AG04449 (cell line): ENCODE measurements at regions of chr1 and their contacts with region 1.

Region 1: DNA sequence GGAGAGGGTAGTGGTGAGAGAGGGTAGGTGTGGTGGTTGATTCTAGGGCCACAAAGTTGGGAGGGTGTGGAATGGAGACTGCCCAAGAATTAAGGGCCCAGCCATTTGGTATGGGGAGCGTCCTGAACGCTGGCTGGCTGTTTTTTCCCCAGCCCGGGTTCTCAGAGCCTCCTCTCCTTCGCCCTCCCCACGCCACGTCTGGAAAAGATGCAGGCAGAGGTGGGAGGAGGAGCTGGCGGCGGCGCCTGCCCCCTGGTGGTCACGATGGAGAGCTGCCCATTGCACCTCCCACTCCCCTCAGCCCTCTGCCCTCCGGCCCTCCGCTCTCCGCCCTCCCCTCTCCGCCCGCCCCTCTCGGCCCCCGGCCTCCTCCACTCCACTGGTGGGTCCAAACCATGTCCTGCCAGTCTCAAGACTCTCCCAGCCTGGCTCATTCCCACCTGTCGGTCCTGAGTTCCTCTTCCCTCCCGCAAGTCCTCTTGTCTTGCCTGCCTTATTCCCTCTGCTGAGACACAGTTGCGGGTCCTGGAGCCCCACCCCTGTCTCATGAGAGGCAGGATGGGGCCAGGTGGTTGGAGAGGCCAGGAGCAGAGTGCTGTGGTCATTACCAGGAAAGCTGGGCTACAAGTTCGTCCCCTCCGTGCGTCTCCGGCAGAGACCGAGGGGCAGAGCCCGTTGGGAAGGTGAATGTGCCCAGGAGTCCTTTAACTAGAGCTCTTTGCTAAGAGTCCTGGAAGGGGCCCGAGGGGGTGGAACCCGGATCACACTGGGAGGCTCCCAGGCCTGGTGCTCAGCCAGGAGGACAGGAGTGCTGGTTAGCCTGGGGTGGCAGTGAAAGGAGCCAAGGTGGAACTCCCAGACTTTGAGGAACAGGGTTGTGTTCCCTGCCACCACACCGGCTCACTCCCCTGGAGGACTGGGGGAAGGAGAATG is 22.6 kb downstream of the ETNK2 start:
- DNase-seq: no peak
- H3K4me3 ChIP-seq: no peak overlapping the region
- CTCF ChIP-seq: peak; percentile 96

Region 2: DNA sequence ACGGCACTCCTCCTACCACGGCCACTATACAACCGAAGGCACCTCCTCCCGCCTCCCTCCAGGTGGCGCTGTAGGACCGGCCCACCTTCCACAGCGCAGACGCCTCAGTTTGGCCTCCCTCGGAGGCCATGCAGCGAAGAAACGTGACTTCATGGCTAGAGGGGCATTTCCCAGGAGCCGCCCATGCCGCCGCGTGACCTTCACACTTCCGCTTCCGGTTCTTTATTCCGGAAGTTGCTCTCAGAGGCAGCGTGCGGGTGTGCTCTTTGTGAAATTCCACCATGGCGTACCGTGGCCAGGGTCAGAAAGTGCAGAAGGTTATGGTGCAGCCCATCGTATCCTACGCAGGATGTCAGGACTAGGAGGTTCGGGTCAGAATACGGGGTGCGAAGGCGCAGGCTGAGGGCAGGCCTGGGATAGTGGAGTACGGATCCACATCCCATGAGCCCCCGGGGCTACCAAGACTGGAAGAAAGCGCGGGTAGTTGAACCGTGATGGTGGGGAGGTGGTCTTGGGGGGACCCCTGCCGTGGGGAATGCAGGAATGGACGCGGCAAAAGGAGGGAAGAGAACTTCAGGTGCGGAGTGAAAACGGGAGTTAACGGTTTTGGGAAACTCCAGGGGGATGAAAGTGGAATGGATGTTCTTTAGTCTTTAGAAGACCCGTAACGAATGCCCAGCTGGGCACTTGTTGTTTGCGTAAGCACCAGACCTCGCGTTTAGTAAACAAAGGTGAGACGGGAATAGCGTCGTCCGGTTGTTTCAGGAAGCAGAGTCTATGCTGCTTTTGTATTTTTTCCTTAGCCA is 267.6 kb before region 1 on chr1 and contains the start of gene SNRPE:
- CTCF ChIA-PET with region 1: interaction called, 1,069 read pairs
- POLR2A ChIA-PET with region 1: interaction called, 4 read pairs
- DNase-seq: peak; percentile 82
- H3K4me3 ChIP-seq: peak within 1 kb of the TSS; percentile 100
- CTCF ChIP-seq: peak; percentile 98

Region 3: DNA sequence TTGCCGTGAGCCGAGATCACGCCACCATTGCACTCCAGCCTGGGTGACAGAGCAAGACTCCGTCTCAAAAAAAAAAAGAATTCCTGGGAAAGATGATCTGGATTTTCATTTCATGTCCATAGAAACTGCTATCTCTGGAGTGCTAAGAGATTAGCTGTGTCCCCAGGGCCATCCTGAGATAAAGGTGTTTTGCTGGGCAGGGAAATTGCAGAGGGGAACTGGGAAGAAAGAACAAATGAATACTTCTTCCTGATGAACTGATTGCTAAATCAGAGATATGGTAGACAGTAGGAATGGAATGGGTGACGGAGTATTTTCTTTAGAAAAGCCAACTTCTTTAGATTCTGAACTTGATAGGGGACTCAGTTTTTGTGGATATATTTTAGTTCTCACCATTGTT is 248.6 kb before region 1 on chr1:
- CTCF ChIA-PET with region 1: interaction called, 1,069 read pairs
- POLR2A ChIA-PET with region 1: no interaction called
- DNase-seq: no peak
- H3K4me3 ChIP-seq: no peak overlapping the region
- CTCF ChIP-seq: no peak

Region 4: GRCh38 chr1:203913073-203913521 is 216.1 kb before region 1 on chr1:
- CTCF ChIA-PET with region 1: interaction called, 13 read pairs
- POLR2A ChIA-PET with region 1: no interaction called
- DNase-seq: no peak
- H3K4me3 ChIP-seq: no peak overlapping the region
- CTCF ChIP-seq: no peak

Region 5: DNA sequence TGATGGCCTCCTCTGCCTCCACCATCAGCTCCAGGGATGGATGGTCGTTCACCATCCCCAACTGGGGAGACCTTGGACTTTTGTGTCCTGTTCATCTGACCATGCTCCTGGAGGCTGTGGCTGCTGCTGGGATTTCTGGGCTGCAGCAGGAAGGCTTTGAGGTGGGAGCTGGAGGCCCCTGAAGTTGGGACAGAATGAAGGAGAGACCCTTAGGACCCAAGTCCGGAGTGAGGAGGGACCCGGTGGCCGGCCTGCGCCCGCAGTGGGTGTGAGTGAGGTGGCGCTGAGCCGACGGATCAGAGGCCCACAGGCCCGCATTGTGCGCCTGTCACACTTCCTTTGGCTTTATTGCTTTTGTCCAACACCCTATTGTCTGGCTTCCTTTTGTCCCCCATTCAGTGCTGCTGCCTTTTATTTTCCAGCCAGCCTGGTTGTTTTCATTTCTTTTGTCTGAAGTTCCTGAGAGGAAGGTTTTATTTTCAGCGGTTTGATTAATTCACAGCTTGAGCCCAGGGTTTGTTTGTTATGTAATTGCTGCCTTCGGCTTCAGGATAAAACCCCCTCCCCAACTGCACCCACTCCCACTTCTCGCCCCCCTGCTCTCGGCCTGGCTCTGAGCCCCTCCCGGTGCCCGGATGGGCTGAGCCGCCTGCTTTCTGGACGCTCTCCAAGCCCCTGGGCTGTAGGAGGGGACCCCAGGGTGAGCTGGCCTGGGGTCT is 20.6 kb before region 1 on chr1:
- CTCF ChIA-PET with region 1: interaction called, 23 read pairs
- POLR2A ChIA-PET with region 1: no interaction called
- DNase-seq: no peak
- H3K4me3 ChIP-seq: no peak overlapping the region
- CTCF ChIP-seq: no peak

Region 6: GRCh38 chr1:204145033-204145504 is 15.8 kb after region 1 on chr1:
- CTCF ChIA-PET with region 1: interaction called, 87 read pairs
- POLR2A ChIA-PET with region 1: no interaction called
- DNase-seq: no peak
- H3K4me3 ChIP-seq: no peak overlapping the region
- CTCF ChIP-seq: no peak

Region 7: DNA sequence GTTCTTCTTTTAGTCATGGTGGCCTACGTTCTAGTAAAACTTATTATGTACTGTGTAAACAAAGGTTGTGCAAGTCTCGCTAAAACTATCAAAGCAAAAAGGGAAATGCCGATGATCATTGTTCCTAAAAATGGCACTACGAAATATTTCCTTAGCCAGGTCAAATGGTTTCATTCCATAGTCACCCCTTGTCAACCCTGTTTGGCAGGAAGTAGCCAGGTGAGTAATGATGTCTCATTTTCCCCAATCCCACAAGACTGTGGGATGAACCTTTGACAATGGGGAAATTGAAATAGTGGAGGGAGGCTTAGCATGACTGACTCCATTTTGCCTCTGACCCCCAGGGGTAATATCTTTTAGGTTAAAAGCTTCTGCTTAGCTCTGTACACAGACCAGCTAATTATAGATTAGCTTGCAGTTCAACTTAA is 42.5 kb after region 1 on chr1:
- CTCF ChIA-PET with region 1: interaction called, 10 read pairs
- POLR2A ChIA-PET with region 1: no interaction called
- DNase-seq: no peak
- H3K4me3 ChIP-seq: no peak overlapping the region
- CTCF ChIP-seq: no peak

Region 8: DNA sequence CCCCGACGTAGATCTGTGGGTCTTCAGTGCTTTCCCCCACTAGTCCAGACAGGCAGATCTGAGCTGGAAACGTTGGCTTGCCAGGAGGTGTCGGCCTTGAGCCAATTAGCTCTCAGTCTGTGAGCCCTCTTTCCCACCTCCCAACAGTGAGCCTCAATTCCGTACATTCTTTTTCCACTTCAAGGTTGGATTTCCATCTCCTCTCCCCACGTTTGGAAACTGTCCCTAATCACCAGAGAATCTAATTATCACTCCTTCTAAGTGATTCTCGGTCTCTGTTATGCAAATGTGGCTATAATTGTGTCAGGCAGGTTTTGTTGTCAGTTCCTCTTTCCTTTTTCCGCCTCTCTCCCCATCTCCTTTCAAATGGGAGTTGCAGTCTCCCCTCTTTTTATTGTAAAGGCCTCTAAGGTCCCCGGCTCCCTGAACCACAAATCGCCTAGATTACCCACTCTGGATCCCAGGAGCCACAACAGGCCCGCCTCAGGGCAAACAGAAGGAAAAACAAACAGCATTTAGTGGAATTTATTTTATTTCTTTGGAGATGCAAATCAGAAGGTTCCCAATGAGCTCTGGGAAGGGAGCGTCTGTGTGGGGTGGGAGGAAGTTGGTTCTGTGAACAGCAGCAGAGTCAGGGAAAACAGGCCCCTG is 585.8 kb after region 1 on chr1:
- CTCF ChIA-PET with region 1: no interaction called
- POLR2A ChIA-PET with region 1: no interaction called
- DNase-seq: no peak
- H3K4me3 ChIP-seq: no peak overlapping the region
- CTCF ChIP-seq: no peak